ENCODE measurements at regions of chr7 and their contacts with region 1.

Region 1: GRCh38 chr7:155598810-155599210 is 45.7 kb upstream of the RBM33 start:
- DNase-seq: peak; percentile 72 to 94 (median 91)
- ATAC-seq: peak; percentile 65 to 80
- H3K4me3 ChIP-seq: no peak overlapping the region
- H3K27ac ChIP-seq: no peak overlapping the region
- H3K4me1 ChIP-seq: no peaks in the 10 kb centered on the region
- H3K27me3 ChIP-seq: no peaks in the 10 kb centered on the region

Region 2: GRCh38 chr7:155738652-155739537 is 140.1 kb after region 1 on chr7:
- intact Hi-C with region 1: loop called (anchors 5 to 10 kb)
- DNase-seq: peak; percentile 74 to 92 (median 81)
- ATAC-seq: peak; percentile 78 to 83
- H3K4me3 ChIP-seq: no peak overlapping the region
- H3K27ac ChIP-seq: no peak overlapping the region
- H3K4me1 ChIP-seq: peaks cover 1% of the 10 kb centered on the region
- H3K27me3 ChIP-seq: no peaks in the 10 kb centered on the region

Region 3: DNA sequence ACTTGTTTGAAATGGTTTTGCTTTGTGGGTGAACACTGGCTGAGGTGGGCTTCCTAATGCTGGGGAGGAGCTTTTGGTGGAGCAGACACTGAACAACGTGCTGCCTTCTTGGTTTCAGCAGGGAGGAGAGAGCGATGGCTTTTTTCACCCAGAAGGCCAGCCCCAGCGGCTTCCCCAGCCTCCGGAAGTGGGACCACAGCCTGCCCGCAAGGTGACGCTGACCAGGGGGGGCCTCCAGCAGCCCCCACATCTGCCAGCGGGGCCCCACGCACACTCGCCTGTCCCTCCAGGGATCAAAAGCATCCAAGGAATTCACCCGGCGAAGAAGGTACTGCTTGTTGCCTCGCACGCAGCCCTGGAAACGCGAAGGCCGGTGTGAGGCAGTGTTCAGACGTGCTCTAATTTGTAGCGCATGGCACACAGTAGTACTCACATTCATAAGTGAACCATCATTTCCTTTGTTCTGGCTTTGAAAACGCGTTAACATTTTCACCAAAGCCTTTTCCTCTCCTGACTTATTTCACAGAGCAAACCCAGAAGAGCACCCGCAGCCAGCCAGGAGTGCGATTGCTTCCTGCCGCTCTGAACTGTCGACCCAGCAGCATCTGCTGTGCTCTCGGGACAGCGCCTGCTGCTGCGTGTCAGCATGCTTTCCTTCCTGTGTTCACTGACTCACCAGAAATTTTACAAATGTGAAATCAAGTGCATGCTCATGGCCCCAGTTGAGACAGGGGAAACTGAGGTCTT is 165.1 kb after region 1 on chr7:
- intact Hi-C with region 1: loop called (anchors 5 to 10 kb)
- DNase-seq: no peak
- ATAC-seq: peak; percentile 6 to 59
- H3K4me3 ChIP-seq: no peak overlapping the region
- H3K27ac ChIP-seq: no peak overlapping the region
- H3K4me1 ChIP-seq: peaks cover 11% of the 10 kb centered on the region
- H3K27me3 ChIP-seq: no peaks in the 10 kb centered on the region

Region 4: DNA sequence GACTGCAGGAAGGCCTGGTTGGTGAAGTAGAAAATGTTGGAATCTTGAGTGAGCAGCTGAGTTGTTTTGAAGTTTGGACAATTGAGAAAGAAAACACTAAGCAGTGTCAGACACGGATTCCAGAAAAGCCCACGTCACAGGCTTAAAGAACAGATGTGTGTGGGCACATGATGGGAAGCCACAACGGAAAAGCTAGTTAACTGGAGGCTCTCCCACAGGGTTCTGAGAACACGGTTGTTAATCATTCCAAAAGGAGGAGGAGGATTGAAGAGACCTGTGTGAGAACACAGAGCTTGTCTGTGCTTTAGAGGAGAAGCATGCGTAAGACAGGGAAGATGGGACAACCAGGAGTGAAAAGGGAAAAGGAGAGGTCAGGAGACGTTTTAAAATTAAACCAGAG is 170.9 kb after region 1 on chr7:
- intact Hi-C with region 1: loop called (anchors 5 to 10 kb)
- DNase-seq: no peak
- ATAC-seq: no peak
- H3K4me3 ChIP-seq: no peak overlapping the region
- H3K27ac ChIP-seq: no peak overlapping the region
- H3K4me1 ChIP-seq: no peaks in the 10 kb centered on the region
- H3K27me3 ChIP-seq: no peaks in the 10 kb centered on the region